IMR-90 (cell line): ENCODE measurements at regions of chr1 and their contacts with region 1.

Region 1: GRCh38 chr1:19087737-19088594 is 122.1 kb downstream of the UBR4 start:
- DNase-seq: peak; percentile 14
- ATAC-seq: no peak
- H3K4me3 ChIP-seq: no peak overlapping the region
- H3K27ac ChIP-seq: peak overlapping the region; percentile 35; the same call in 1 of the 2 replicates
- H3K4me1 ChIP-seq: peaks cover 33% of the 10 kb centered on the region
- H3K27me3 ChIP-seq: no peaks in the 10 kb centered on the region
- CTCF ChIP-seq: no peak
- POLR2A ChIP-seq: no peak
- RAD21 ChIP-seq: no peak

Region 2: GRCh38 chr1:18883636-18884418 is 204.1 kb before region 1 on chr1:
- CTCF ChIA-PET with region 1: interaction called, 5 read pairs
- POLR2A ChIA-PET with region 1: no interaction called
- dilution Hi-C with region 1: no loop called
- in situ Hi-C with region 1: no loop called
- intact Hi-C with region 1: loop called (anchors 1 kb)
- DNase-seq: peak; percentile 66
- ATAC-seq: peak; percentile 97
- H3K4me3 ChIP-seq: no peak overlapping the region
- H3K27ac ChIP-seq: no peak overlapping the region
- H3K4me1 ChIP-seq: peaks cover 6% of the 10 kb centered on the region
- H3K27me3 ChIP-seq: no peaks in the 10 kb centered on the region
- CTCF ChIP-seq: peak; percentile 85
- POLR2A ChIP-seq: no peak
- RAD21 ChIP-seq: peak; percentile 80

Region 3: GRCh38 chr1:19010995-19011844 is 76.7 kb before region 1 on chr1:
- CTCF ChIA-PET with region 1: no interaction called
- POLR2A ChIA-PET with region 1: no interaction called
- dilution Hi-C with region 1: no loop called
- in situ Hi-C with region 1: no loop called
- intact Hi-C with region 1: loop called (anchors 1 kb)
- DNase-seq: peak; percentile 97
- ATAC-seq: peak; percentile 91
- H3K4me3 ChIP-seq: no peak overlapping the region
- H3K27ac ChIP-seq: peak overlapping the region; percentile 86
- H3K4me1 ChIP-seq: peaks cover 26% of the 10 kb centered on the region
- H3K27me3 ChIP-seq: no peaks in the 10 kb centered on the region
- CTCF ChIP-seq: no peak
- POLR2A ChIP-seq: peak; percentile 61; the same call in 1 of the 2 replicates
- RAD21 ChIP-seq: peak; percentile 12